Calu3 (cell line): ENCODE measurements at regions of chr7 and their contacts with region 1.

Region 1: DNA sequence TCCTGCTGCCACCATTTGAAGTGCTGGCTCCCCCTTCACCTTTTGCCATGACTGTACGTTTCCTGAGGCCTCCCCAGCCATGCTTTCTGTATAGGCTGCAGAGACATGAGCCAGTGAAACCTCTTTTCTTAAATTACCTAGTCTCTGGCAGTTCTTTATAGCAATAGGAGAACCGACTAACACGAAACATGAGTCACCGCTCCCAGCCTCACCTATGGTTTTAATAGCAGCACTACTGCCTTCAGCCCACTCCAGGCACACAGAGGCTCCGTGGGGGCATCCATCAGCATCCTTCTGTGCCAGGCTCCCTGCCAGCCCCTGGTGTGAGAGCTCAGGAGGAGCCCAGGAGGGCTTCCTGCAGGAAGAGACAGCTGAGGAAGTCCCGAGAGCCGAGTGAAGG is 5.5 kb upstream of the ZNF316 start:
- DNase-seq: no peak
- H3K4me3 Mint-ChIP-seq: no peak overlapping the region
- H3K27ac Mint-ChIP-seq: no peak overlapping the region
- H3K4me1 Mint-ChIP-seq: no peaks in the 10 kb centered on the region
- H3K27me3 Mint-ChIP-seq: no peaks in the 10 kb centered on the region
- CTCF ChIP-seq: no peak

Region 2: DNA sequence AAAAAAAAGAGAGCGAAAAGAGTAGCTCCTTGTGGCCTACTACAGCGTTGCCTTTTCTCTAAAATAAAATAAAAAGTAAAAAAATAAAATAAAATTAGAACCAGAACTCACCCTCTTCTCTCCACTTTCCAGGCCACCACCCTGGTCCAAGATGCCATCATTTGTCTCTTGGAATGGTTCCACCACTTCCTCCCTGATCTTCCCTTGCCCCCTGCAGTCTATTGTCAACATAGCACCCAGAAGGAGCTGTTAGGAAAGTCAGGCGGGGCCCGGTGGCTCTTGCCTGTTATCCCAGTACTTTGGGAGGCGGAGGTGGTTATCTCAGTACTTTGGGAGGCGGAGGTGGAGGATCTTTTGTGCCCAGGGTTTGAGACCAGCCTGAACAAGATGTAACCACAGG is 72.8 kb before region 1 on chr7:
- CTCF ChIA-PET with region 1: interaction called, 16 read pairs
- intact Hi-C with region 1: no loop called
- DNase-seq: peak; percentile 59
- H3K4me3 Mint-ChIP-seq: no peak overlapping the region
- H3K27ac Mint-ChIP-seq: no peak overlapping the region
- H3K4me1 Mint-ChIP-seq: no peaks in the 10 kb centered on the region
- H3K27me3 Mint-ChIP-seq: peaks cover 32% of the 10 kb centered on the region
- CTCF ChIP-seq: peak; percentile 58

Region 3: DNA sequence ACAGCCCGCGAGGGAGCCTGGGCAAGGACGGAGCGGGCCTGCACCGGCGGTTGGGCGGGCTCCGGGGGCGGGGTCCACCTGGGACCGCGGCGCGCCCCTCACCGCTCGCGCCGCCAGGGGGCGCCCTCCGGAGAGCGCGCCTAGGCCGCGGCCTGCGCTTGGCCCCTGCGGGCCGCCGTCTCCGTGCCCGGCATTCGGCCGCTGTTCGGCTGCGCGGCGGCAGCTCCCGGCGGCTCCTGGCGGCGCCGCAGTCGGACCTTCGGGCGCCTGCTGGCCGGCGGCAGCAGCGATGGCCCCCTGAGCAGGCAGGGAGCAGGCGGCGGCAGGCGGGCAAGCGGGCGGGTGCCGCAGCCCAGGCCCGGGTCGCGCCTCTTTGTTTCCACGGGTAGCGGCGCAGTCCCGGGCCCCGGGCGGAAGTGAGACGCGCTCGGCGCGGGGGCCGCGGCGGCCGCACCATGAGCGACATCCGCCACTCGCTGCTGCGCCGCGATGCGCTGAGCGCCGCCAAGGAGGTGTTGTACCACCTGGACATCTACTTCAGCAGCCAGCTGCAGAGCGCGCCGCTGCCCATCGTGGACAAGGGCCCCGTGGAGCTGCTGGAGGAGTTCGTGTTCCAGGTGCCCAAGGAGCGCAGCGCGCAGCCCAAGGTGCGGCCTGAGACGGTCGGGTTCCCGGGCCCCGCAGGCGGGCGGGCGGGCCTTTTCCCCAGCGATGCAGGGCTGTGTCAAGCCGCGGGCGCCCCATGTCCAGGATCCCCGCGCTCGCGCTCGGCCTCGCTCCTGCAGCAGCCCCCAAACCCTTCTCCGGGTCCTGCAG is 41.6 kb before region 1 on chr7 and contains the start of gene INTS15:
- CTCF ChIA-PET with region 1: no interaction called
- intact Hi-C with region 1: no loop called
- DNase-seq: peak; percentile 95
- H3K4me3 Mint-ChIP-seq: peak within 1 kb of the TSS; percentile 72
- H3K27ac Mint-ChIP-seq: peak within 1 kb of the TSS; percentile 73
- H3K4me1 Mint-ChIP-seq: no peaks in the 10 kb centered on the region
- H3K27me3 Mint-ChIP-seq: no peaks in the 10 kb centered on the region
- CTCF ChIP-seq: peak; percentile 93
- total RNA-seq, gene INTS15: 34.1 and 35.0 TPM in 2 replicates

Region 4: GRCh38 chr7:6691609-6692106 is 60.1 kb after region 1 on chr7:
- CTCF ChIA-PET with region 1: no interaction called
- intact Hi-C with region 1: no loop called
- DNase-seq: no peak
- H3K4me3 Mint-ChIP-seq: no peak overlapping the region
- H3K27ac Mint-ChIP-seq: peak overlapping the region; percentile 64
- H3K4me1 Mint-ChIP-seq: no peaks in the 10 kb centered on the region
- H3K27me3 Mint-ChIP-seq: no peaks in the 10 kb centered on the region
- CTCF ChIP-seq: no peak